ENCODE measurements at regions of chr11 and their contacts with region 1.

Region 1: GRCh38 chr11:86456052-86456939 is 81.6 kb downstream of the CCDC81 start:
- DNase-seq: peak; percentile 72
- H3K4me3 ChIP-seq: no peak overlapping the region
- H3K27ac ChIP-seq: no peak overlapping the region
- H3K4me1 ChIP-seq: no peaks in the 10 kb centered on the region
- CTCF ChIP-seq: peak; percentile 95

Region 2: DNA sequence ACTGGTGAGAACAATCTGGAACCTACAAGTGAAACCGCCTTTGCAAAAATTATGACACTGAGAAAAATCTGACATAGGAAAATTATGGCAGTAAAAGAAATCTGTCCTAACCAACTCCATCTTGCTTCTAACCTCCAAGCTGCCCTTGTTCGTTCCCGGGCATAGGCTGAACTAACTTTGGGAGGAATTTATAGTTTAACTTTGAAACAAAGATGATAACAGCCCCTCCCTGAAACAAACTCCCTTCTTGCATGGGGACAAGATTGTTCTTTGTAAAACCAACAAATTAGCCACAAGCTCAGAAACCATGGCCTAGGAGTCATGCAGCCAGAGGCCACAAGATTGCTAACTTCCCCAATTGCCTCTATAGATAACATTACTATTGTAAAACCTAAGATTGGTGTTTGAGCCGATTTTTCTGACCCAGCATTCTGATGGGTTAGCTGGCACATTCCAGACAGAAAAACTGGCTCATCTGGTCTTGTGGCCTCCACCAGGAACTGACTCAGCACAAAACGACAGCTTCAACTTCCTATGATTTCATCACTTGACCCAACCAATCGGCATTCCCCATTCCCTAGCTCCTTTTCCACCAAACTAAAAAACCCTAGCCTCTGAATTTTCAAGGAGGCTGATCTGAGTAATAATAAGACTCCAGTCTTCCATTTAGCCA is 85.2 kb before region 1 on chr11:
- CTCF ChIA-PET with region 1: no interaction called
- POLR2A ChIA-PET with region 1: no interaction called
- intact Hi-C with region 1: no loop called
- DNase-seq: no peak
- H3K4me3 ChIP-seq: no peak overlapping the region
- H3K27ac ChIP-seq: no peak overlapping the region
- H3K4me1 ChIP-seq: no peaks in the 10 kb centered on the region
- CTCF ChIP-seq: no peak

Region 3: DNA sequence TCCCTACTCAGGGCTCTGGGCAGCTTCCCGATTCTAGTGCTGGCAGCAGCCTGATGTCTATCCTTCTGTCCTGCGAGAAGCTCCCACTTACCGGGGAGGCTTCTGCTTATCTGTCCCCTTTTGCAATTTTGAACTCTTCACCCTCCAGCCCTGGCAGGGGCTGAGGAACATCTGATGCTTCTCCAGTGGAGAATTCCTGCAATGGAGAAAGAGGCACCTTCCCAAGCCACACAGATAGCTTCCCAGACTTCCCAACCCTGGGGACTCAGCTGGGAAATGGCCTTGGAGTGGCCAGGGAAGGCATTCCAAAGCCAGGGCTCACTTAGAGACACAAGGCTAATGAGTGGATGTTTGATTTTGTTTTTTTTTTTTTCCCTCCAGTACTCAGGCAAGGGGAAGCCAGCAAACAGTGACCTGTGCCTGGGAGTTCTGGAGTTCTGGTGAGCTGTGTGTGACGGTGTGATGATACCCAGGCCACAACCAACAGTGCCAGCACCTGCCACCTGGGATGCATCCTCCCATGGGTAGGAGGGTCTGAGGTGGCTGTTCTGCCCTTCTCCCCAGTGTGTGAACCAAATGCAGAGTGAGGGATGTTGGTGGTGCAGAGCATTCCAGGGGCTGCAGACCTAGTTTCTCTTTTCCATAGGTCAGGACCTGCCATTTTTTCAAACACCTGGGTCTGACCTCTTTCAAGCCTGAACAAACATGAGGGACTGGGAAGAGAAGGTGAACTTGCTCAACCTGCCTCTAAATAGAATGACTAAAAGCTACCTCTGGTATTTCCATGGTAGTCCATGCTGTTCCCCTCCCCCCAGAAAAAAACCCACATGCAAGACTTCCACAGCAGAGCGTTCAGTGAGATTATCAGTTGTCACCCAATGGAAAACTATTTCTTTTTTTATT is 13.4 kb after region 1 on chr11:
- CTCF ChIA-PET with region 1: no interaction called
- POLR2A ChIA-PET with region 1: no interaction called
- intact Hi-C with region 1: no loop called
- DNase-seq: no peak
- H3K4me3 ChIP-seq: no peak overlapping the region
- H3K27ac ChIP-seq: no peak overlapping the region
- H3K4me1 ChIP-seq: no peaks in the 10 kb centered on the region
- CTCF ChIP-seq: no peak

Region 4: GRCh38 chr11:86608251-86608799 is 152.0 kb after region 1 on chr11:
- CTCF ChIA-PET with region 1: no interaction called
- POLR2A ChIA-PET with region 1: no interaction called
- intact Hi-C with region 1: loop called (anchors 5 kb)
- DNase-seq: peak; percentile 47
- H3K4me3 ChIP-seq: no peak overlapping the region
- H3K27ac ChIP-seq: no peak overlapping the region
- H3K4me1 ChIP-seq: no peaks in the 10 kb centered on the region
- CTCF ChIP-seq: peak; percentile 99

Region 5: GRCh38 chr11:86818466-86819192 is 362.3 kb after region 1 on chr11:
- CTCF ChIA-PET with region 1: no interaction called
- POLR2A ChIA-PET with region 1: no interaction called
- intact Hi-C with region 1: loop called (anchors 1 kb)
- DNase-seq: peak; percentile 58
- H3K4me3 ChIP-seq: no peak overlapping the region
- H3K27ac ChIP-seq: no peak overlapping the region
- H3K4me1 ChIP-seq: no peaks in the 10 kb centered on the region
- CTCF ChIP-seq: peak; percentile 89

Region 6: DNA sequence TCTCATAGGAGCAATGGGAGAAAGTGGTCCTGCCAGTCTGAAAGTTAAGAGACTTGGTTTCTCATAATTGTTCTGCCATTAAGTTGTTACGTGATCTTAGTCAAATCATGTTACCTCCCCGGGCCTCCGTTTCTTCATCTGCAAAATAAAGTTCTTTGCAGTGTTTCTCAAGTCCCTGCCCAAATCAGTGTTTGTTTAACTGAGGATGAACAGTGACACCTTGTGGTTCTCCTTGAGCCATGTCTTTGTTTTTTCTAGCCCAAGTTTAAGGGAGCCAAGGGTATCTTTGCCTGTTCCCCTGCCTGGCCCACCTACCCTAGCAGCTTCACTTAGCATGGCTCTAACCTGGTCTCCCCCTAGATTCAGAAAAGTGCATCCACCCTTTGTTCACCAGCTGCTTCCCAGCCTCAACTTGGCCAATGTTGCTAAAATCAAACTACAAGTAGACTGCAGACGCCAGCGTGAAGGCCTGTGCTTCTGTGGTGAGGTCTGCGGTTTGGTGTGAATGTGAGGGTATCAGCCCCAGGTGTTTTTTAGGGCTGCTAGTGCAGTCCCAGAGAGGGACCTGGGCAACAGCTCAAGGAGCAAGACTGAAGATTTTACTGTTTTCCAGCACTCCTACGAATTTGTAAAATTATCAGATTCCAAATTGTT is 463.4 kb after region 1 on chr11:
- CTCF ChIA-PET with region 1: no interaction called
- POLR2A ChIA-PET with region 1: no interaction called
- intact Hi-C with region 1: loop called (anchors 2 kb)
- DNase-seq: peak; percentile 48
- H3K4me3 ChIP-seq: no peak overlapping the region
- H3K27ac ChIP-seq: no peak overlapping the region
- H3K4me1 ChIP-seq: no peaks in the 10 kb centered on the region
- CTCF ChIP-seq: peak; percentile 79